ENCODE measurements at regions of chr7 and their contacts with region 1.

Region 1: GRCh38 chr7:2796358-2797352 is 47.5 kb downstream of the GNA12 start:
- DNase-seq: peak in 5 of 7 donors; percentile 47 to 82 (median 51)
- H3K4me3 ChIP-seq: no peak overlapping the region
- H3K27ac ChIP-seq: peak overlapping the region in 3 of 5 donors; percentile 60 to 81 (median 75)
- H3K4me1 ChIP-seq: peaks cover 6 to 28% of the 10 kb centered on the region in 2 donors
- H3K27me3 ChIP-seq: no peaks in the 10 kb centered on the region
- CTCF ChIP-seq: no peak
- POLR2A ChIP-seq: no peak

Region 2: DNA sequence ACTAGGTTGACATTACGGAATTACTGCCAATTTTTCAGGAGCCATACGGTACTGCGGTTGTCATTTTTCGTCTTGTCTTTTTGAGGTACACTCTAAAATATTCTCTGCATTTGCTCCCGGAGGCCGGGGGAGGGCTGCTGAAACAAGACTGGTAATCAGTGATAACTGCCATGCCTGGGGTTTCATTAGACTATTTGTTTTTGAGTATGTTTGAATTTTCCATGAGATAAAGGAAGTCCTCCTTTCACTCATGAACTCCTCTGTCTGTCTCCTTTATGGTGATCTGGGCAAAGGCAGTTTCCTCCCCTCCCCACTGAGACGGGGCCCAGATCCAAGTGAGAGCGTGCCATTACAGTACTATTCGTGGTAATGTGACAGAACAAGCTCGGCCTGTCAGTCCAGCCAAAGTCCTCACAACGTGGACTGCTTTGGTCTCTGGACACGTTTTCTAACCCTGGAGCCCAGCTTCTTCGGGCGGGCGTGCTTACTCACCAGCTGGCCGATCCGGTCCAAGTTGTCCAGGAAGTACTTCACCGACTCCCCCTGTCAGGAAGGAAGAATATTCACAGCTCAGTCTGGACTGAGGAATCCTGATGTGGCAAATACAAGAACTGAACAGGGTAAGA is 63.6 kb before region 1 on chr7:
- intact Hi-C with region 1: loop called in 1 of 2 experiments (anchors 10 kb)
- DNase-seq: peak in 6 of 7 donors; percentile 48 to 72 (median 62)
- H3K4me3 ChIP-seq: no peak overlapping the region
- H3K27ac ChIP-seq: peak overlapping the region in 2 of 5 donors; percentile 79
- H3K4me1 ChIP-seq: peaks cover 0 to 37% of the 10 kb centered on the region in 2 donors
- H3K27me3 ChIP-seq: no peaks in the 10 kb centered on the region
- CTCF ChIP-seq: no peak
- POLR2A ChIP-seq: no peak

Region 3: GRCh38 chr7:2821842-2822507 is 25.3 kb after region 1 on chr7:
- intact Hi-C with region 1: loop called in 1 of 2 experiments (anchors 2 kb)
- DNase-seq: peak in 2 of 7 donors; percentile 33 to 58
- H3K4me3 ChIP-seq: no peak overlapping the region
- H3K27ac ChIP-seq: peak overlapping the region in 2 of 5 donors; percentile 72 to 77
- H3K4me1 ChIP-seq: peaks cover 24 to 65% of the 10 kb centered on the region in 2 donors
- H3K27me3 ChIP-seq: no peaks in the 10 kb centered on the region
- CTCF ChIP-seq: no peak
- POLR2A ChIP-seq: no peak

Measured in adrenal gland (tissue), 19 donors.